Esophagus squamous epithelium (tissue), 5 donors: ENCODE measurements at regions of chr12 and their contacts with region 1.

Region 1: DNA sequence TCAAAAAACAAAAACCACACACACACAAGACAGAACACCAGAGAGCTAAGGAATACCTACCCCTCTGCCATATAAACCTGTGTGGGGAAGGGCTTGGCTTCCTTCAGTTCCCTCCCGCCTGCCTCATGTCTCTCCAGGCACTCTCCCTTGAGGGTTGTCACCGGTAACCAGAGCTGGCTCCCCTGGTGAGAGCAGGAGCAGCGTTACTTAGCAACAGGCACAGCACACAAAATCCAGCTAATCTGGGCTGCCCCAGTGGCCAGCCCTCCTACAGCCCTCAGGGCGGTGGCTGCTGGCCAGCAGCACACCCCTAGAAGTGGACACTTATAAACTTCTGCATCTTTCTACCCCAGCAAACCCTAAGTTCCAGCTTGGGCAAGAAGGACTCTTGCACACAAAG is 21.6 kb upstream of the NR4A1 start:
- DNase-seq: no peak
- H3K4me3 ChIP-seq: no peak overlapping the region
- H3K27ac ChIP-seq: no peak overlapping the region
- H3K4me1 ChIP-seq: peaks cover 9 to 39% (median 26%) of the 10 kb centered on the region in 3 donors
- H3K27me3 ChIP-seq: peaks cover 0 to 3% (median 0%) of the 10 kb centered on the region in 4 donors
- CTCF ChIP-seq: no peak
- POLR2A ChIP-seq: no peak

Region 2: DNA sequence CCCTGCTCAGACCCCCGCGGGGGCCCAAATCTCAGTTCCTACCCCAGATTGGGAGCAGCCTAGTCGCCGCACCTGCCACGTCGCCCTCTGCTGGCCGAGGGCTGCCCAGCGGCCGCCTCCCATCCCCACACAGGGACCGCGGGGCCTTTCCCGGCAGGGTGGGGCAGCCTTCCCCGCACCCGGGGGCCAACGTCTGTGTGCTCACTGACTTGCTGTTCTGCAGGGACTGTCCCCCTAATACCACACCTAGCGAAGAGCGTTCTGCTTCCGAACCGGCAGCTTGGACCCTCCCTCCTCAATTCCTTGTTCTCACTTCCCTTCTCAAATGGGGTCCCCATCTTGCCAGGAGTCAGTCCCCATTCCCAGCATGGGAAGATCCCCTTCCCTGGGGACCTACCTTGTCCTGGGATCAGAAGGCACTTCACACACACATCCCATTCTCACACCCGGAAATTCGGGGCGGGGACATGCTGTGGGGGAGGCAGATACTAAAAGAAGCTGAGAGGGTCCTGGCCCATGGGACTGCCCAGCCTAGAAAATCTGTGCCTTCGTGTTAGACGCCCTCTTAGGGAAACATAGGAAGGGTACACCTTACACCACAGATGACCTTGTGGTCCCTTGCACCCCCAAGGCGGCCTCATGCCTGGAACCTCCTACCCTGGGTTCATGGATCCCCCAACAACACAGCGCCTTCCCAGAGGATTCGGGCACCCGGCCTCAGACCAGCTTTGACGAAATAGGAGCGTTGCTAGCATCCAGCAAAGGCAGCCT is 106.0 kb before region 1 on chr12:
- intact Hi-C with region 1: no loop called
- DNase-seq: no peak
- H3K4me3 ChIP-seq: peak overlapping the region in 1 of 4 donors; percentile 44
- H3K27ac ChIP-seq: peak overlapping the region; percentile 33 to 83 (median 77)
- H3K4me1 ChIP-seq: peaks cover 10 to 29% (median 18%) of the 10 kb centered on the region in 3 donors
- H3K27me3 ChIP-seq: no peaks in the 10 kb centered on the region
- CTCF ChIP-seq: peak; percentile 47 to 82 (median 70)
- POLR2A ChIP-seq: no peak

Region 3: GRCh38 chr12:51941011-51941581 is 88.6 kb before region 1 on chr12:
- intact Hi-C with region 1: no loop called
- DNase-seq: no peak
- H3K4me3 ChIP-seq: peak overlapping the region in 2 of 4 donors; percentile 0 to 12
- H3K27ac ChIP-seq: peak overlapping the region; percentile 24 to 89 (median 78)
- H3K4me1 ChIP-seq: peaks cover 18 to 57% (median 18%) of the 10 kb centered on the region in 3 donors
- H3K27me3 ChIP-seq: no peaks in the 10 kb centered on the region
- CTCF ChIP-seq: no peak
- POLR2A ChIP-seq: no peak

Region 4: DNA sequence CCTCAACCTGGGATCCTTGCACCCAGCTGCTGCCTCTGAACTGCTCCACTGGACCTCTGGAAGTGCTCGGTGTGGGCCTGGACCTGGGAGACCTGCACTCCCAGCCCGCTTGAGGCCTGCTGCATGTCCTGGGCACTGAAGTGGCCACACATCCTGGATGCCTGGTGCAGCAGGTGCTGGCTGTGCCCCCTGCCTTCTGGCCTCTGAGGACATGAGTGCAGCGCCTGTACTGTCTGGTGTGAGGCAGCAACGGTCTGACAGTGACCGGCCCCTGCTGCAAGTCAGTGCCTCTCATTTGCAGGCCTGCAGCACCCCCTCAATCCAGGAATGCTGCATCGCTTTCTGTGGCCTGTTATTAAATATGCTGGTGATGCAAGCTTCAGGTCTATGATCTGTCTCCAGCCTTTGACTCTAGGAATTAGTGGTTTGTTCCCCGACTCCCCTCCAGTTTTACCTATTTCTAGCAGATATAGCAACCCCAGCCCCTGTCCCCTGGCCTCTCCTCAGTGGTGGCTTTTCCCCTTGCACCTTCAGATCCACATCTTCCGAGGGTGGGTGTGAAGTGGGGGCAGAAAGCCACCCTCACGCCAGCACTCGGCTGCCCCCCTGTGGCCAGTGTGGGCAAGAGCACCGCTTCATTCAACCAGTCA is 53.4 kb after region 1 on chr12:
- intact Hi-C with region 1: loop called (anchors 5 kb)
- DNase-seq: no peak
- H3K4me3 ChIP-seq: no peak overlapping the region
- H3K27ac ChIP-seq: peak overlapping the region in 2 of 4 donors; percentile 70 to 82
- H3K4me1 ChIP-seq: peaks cover 0 to 35% (median 20%) of the 10 kb centered on the region in 3 donors
- H3K27me3 ChIP-seq: peaks cover 0 to 27% (median 0%) of the 10 kb centered on the region in 4 donors
- CTCF ChIP-seq: peak; percentile 89 to 96 (median 92)
- POLR2A ChIP-seq: no peak